ENCODE measurements at regions of chr3 and their contacts with region 1.

Region 1: DNA sequence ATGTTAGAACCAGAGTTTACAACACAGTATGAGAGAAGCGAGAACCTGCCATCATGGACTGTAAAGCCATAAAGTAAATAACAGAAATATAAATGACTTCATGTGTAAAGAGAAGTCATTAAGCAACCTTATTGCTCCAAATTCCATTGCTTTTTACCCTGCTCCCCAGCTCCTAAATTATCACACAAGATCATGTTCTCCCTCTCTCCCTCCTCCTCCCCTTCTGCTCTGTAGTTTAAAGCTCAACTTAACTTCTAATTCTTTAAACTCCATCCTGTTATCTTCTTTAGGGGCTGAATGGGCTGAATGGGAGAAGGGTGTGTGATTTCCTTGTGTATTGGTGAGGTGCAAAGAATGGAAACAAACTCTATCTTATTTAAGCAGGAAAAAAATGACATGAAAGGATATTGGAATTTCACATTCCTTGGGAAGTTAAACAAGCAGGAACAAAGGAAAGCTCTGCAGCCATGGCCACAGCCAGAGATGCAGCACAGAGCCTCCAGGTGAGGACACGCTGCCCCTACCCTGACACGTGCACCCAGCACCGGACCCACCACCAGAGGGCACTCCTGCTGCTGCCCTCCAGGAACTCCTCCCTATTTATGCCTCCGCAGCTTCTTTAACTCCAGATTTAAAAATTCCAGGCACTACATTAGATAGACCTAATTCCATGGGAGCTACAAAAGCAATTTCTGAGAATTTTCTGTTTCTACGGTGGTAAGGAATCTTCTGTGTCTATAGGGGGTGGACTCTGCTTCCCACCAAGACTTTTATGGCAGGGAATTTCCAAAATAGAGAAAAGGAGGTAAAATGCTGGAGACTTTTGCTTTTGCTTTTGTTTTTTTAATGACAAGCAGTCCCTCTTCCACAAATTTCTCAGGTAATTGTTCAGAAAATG is 76.9 kb upstream of the ABI3BP start:
- DNase-seq: peak; percentile 64 to 80
- ATAC-seq: no peak
- H3K4me3 ChIP-seq: no peak overlapping the region
- H3K27ac ChIP-seq: no peak overlapping the region
- H3K4me1 ChIP-seq: peaks cover 2 to 10% of the 10 kb centered on the region in 2 donors
- H3K27me3 ChIP-seq: no peaks in the 10 kb centered on the region

Region 2: DNA sequence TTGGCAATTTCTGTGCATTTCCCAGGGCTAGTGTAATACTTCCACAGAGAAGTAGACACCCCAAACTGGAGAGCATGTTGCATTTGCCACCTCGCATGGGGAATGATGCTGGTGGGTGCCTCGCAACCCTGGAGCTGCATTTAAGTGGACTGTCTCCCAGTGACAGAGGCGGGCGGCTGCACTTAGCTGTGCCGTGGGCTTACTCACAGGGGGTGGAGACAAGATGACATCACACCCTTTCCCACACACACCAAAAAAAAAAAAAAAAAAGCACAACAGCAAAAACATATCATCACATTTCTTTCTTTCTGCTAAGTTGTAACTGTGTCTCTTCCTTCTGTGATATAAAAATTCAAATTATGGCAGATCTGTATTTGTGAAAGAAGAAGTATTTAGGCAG is 76.8 kb before region 1 on chr3 and contains the start of gene ABI3BP:
- intact Hi-C with region 1: loop called in 1 of 2 experiments (anchors 10 kb)
- DNase-seq: peak; percentile 86 to 91
- ATAC-seq: peak; percentile 96
- H3K4me3 ChIP-seq: peak within 1 kb of the TSS; percentile 66 to 75
- H3K27ac ChIP-seq: peak within 1 kb of the TSS; percentile 5 to 67
- H3K4me1 ChIP-seq: peaks cover 0 to 2% of the 10 kb centered on the region in 2 donors
- H3K27me3 ChIP-seq: no peaks in the 10 kb centered on the region
- total RNA-seq, gene ABI3BP: 213 to 389 TPM

Measured in aorta (tissue), 5 donors.